RWPE1 (cell line): ENCODE measurements at regions of chr10 and their contacts with region 1.

Region 1: DNA sequence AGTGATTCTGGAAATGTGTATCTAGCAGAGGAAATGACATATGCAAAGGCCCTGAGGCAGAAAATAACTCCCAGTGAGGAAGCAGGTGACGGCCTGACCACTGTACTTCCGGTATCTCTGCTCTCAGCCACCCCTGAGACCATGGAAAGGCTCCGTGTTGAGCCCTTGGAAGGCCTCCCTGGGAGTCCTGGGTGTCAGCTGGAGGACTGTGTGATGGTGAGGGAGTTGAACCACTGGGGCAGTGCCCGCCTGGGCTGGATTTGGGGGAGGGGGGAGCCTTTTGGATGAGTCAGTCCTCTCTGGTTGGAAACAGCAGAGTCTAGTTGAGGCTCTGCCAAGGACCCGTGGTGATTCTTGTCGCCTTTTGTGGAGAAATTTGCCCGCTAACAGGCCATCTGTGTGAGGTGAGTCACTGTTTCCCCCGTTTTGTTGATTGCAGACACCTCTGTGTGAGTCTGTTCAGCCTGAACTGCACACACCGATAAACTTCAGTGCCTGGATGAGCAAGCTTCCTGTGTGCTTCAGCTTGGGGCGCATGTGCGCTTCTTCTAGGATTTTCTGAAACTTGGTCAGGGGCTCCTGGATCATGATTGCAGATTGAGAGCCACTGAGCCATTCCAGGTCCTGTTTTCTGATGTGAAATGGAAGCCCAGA is 98.6 kb downstream of the GRK5 start:
- DNase-seq: peak; percentile 87
- H3K27ac ChIP-seq: peak overlapping the region; percentile 93
- CTCF ChIP-seq: no peak

Region 2: GRCh38 chr10:119253433-119254174 is 52.4 kb before region 1 on chr10:
- CTCF ChIA-PET with region 1: no interaction called
- POLR2A ChIA-PET with region 1: no interaction called
- DNase-seq: peak; percentile 88
- H3K27ac ChIP-seq: peak overlapping the region; percentile 72
- CTCF ChIP-seq: no peak

Region 3: DNA sequence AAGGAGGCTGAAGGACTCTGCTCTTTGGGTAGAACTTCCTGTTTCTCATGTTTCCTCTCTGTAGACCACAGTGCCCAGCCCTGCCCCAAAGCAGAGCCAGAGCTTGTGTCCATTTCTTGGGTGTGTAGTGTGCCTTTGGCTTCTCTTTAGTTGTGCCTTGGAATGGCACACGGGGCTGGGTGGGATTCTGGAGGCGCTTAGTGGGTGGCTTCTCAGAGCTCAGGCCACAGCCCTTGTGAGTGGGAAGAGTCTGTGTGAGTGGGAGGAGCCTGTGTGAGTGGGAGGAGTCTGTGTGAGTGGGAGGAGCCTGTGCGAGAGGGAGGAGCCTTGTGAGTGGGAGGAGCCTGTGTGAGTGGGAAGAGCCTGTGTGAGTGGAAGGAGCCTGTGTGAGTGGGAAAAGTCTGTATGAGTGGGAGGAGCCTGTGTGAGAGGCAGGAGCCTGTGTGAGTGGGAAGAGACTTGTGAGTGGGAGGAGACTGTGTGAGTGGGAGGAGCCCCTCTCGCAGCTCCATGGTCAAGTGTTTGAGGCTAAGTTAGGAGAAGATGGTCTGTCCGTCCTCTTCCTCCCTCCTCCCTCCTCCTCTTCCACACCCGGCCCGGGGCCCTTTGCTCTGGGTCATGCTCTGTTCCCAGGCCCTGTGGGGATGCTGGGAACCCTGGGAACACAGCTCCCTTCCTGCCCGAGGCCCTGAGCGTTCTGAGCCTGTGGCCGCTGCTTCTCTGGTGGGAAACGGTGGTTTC is 54.4 kb after region 1 on chr10:
- CTCF ChIA-PET with region 1: interaction called, 10 read pairs
- POLR2A ChIA-PET with region 1: interaction called, 5 read pairs
- DNase-seq: no peak
- H3K27ac ChIP-seq: no peak overlapping the region
- CTCF ChIP-seq: no peak